CD8-positive, alpha-beta T cell (primary cell): ENCODE measurements at regions of chr6 and their contacts with region 1.

Region 1: GRCh38 chr6:111793711-111794111 is 79.5 kb downstream of the FYN start:
- DNase-seq: peak; percentile 33 to 85 (median 54)
- ATAC-seq: peak; percentile 73
- H3K4me3 ChIP-seq: peak overlapping the region; percentile 48 to 62
- H3K4me3 Mint-ChIP-seq: peak overlapping the region; percentile 85
- H3K27ac ChIP-seq: peak overlapping the region; percentile 53 to 75
- H3K27ac Mint-ChIP-seq: peak overlapping the region; percentile 94
- H3K4me1 ChIP-seq: peaks cover 60% of the 10 kb centered on the region
- H3K4me1 Mint-ChIP-seq: peaks cover 71% of the 10 kb centered on the region
- H3K27me3 ChIP-seq: no peaks in the 10 kb centered on the region
- H3K27me3 Mint-ChIP-seq: no peaks in the 10 kb centered on the region
- CTCF ChIP-seq: no peak

Region 2: GRCh38 chr6:111721753-111722154 is 72.0 kb before region 1 on chr6:
- CTCF ChIA-PET with region 1: no interaction called
- POLR2A ChIA-PET with region 1: no interaction called
- intact Hi-C with region 1: loop called (anchors 5 kb)
- DNase-seq: peak in 7 of 9 experiments; percentile 21 to 74 (median 58)
- ATAC-seq: peak; percentile 39
- H3K4me3 ChIP-seq: no peak overlapping the region
- H3K4me3 Mint-ChIP-seq: no peak overlapping the region
- H3K27ac ChIP-seq: peak overlapping the region in 1 of 2 experiments; percentile 72
- H3K27ac Mint-ChIP-seq: peak overlapping the region; percentile 83
- H3K4me1 ChIP-seq: peaks cover 46% of the 10 kb centered on the region
- H3K4me1 Mint-ChIP-seq: peaks cover 86% of the 10 kb centered on the region
- H3K27me3 ChIP-seq: no peaks in the 10 kb centered on the region
- H3K27me3 Mint-ChIP-seq: no peaks in the 10 kb centered on the region
- CTCF ChIP-seq: peak; percentile 66

Region 3: GRCh38 chr6:111764238-111765175 is 29.2 kb before region 1 on chr6:
- CTCF ChIA-PET with region 1: interaction called, 6 read pairs
- POLR2A ChIA-PET with region 1: interaction called, 15 read pairs
- intact Hi-C with region 1: loop called in 1 of 2 experiments (anchors 2 kb)
- DNase-seq: peak in 7 of 9 experiments; percentile 45 to 92 (median 70)
- ATAC-seq: peak; percentile 41
- H3K4me3 ChIP-seq: peak overlapping the region in 1 of 2 experiments; percentile 4
- H3K4me3 Mint-ChIP-seq: peak overlapping the region; percentile 70
- H3K27ac ChIP-seq: peak overlapping the region; percentile 41 to 99
- H3K27ac Mint-ChIP-seq: peak overlapping the region; percentile 99
- H3K4me1 ChIP-seq: peaks cover 98% of the 10 kb centered on the region
- H3K4me1 Mint-ChIP-seq: peaks cover 99% of the 10 kb centered on the region
- H3K27me3 ChIP-seq: no peaks in the 10 kb centered on the region
- H3K27me3 Mint-ChIP-seq: no peaks in the 10 kb centered on the region
- CTCF ChIP-seq: no peak

Region 4: DNA sequence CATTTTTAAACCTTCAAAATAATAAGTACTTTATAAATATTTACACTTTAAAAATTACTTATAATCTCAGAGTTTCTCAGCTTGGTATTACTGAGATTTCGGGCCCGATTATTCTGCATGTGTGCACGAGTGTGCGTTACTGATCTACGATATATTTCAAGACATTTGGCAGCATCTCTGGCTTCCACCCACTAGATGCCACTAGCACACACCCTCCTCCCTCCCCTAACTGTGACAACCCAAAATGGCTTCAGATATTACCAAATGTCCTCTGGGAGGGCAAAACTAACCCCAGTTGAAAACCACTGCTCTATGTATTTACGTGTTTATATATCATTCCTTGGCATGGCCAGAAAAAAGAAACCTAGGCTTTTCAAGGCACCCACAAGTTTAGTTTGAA is 16.4 kb before region 1 on chr6:
- CTCF ChIA-PET with region 1: interaction called, 4 read pairs
- POLR2A ChIA-PET with region 1: interaction called, 5 read pairs
- intact Hi-C with region 1: loop called in 1 of 2 experiments (anchors 1 kb)
- DNase-seq: peak in 4 of 9 experiments; percentile 31 to 82 (median 58)
- ATAC-seq: peak; percentile 60
- H3K4me3 ChIP-seq: no peak overlapping the region
- H3K4me3 Mint-ChIP-seq: peak overlapping the region; percentile 35
- H3K27ac ChIP-seq: peak overlapping the region in 1 of 2 experiments; percentile 64
- H3K27ac Mint-ChIP-seq: peak overlapping the region; percentile 91
- H3K4me1 ChIP-seq: peaks cover 74% of the 10 kb centered on the region
- H3K4me1 Mint-ChIP-seq: peaks cover 90% of the 10 kb centered on the region
- H3K27me3 ChIP-seq: no peaks in the 10 kb centered on the region
- H3K27me3 Mint-ChIP-seq: no peaks in the 10 kb centered on the region
- CTCF ChIP-seq: no peak

Region 5: GRCh38 chr6:111810294-111811131 is 16.8 kb after region 1 on chr6:
- CTCF ChIA-PET with region 1: no interaction called
- POLR2A ChIA-PET with region 1: interaction called, 6 read pairs
- intact Hi-C with region 1: loop called in 1 of 2 experiments (anchors 2 kb)
- DNase-seq: peak in 2 of 9 experiments; percentile 34 to 65
- ATAC-seq: peak; percentile 10
- H3K4me3 ChIP-seq: no peak overlapping the region
- H3K4me3 Mint-ChIP-seq: peak overlapping the region; percentile 59
- H3K27ac ChIP-seq: peak overlapping the region in 1 of 2 experiments; percentile 34
- H3K27ac Mint-ChIP-seq: peak overlapping the region; percentile 92
- H3K4me1 ChIP-seq: peaks cover 90% of the 10 kb centered on the region
- H3K4me1 Mint-ChIP-seq: peaks cover 90% of the 10 kb centered on the region
- H3K27me3 ChIP-seq: no peaks in the 10 kb centered on the region
- H3K27me3 Mint-ChIP-seq: no peaks in the 10 kb centered on the region
- CTCF ChIP-seq: no peak